ENCODE measurements at regions of chr17 and their contacts with region 1.

Region 1: DNA sequence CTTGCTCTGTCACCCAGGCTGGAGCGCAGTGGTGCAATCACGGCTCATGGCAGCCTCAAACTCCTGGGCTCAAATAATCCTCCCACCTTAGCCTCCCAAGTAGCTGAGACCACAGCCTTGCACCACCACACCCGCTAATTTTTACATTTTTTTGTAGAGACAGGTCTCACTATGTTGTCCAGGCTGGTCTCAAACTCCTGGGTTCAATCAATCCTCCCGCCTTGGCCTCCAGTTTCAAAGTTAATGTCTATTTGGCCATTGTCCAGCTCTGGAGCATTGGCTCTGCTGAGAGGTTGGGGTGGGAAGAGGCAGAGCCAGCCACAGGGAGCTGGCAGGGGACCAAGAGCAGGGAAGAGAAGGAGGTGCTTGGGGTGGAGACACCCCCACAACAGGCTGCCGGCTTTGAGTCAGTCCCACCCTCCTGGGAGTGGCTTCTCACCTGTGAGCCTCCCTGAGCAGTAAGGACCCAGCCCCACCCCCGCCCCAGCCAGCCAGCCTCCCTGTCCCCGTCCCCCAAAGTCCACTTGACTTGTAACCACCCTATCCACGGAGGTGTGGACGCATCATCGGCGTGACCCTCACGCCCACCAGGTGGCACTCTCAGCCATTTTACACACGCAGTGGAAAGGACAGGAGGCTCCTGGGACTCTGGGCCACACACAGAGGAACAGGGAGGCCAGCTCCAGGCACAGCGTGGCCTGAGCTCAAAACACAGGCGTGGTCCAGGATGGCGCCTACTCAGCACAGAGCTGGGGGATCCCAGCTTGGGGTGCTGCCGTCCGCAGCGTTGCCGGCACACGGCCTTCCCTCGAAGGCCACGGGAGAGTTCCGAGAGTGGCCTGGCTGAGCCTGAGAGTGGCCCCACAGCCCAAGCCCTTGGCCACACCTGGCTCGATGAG is 22.8 kb upstream of the PVALEF start:
- DNase-seq: peak; percentile 29 to 61 (median 51)
- ATAC-seq: peak; percentile 88
- H3K4me3 ChIP-seq: no peak overlapping the region
- H3K4me3 Mint-ChIP-seq: no peak overlapping the region
- H3K27ac ChIP-seq: no peak overlapping the region
- H3K27ac Mint-ChIP-seq: peak overlapping the region in 1 of 9 donors; percentile 43
- H3K4me1 ChIP-seq: no peaks in the 10 kb centered on the region
- H3K4me1 Mint-ChIP-seq: peaks cover 0 to 4% (median 0%) of the 10 kb centered on the region in 7 donors
- H3K27me3 ChIP-seq: no peaks in the 10 kb centered on the region
- H3K27me3 Mint-ChIP-seq: peaks cover 0 to 4% (median 0%) of the 10 kb centered on the region in 5 donors

Region 2: GRCh38 chr17:81200695-81201580 is 58.4 kb after region 1 on chr17:
- CTCF ChIA-PET with region 1: no interaction called
- POLR2A ChIA-PET with region 1: no interaction called
- intact Hi-C with region 1: loop called in 1 of 2 experiments (anchors 2 kb)
- DNase-seq: peak in 1 of 9 donors; percentile 9
- ATAC-seq: peak; percentile 86
- H3K4me3 ChIP-seq: no peak overlapping the region
- H3K4me3 Mint-ChIP-seq: no peak overlapping the region
- H3K27ac ChIP-seq: no peak overlapping the region
- H3K27ac Mint-ChIP-seq: peak overlapping the region in 1 of 9 donors; percentile 62
- H3K4me1 ChIP-seq: no peaks in the 10 kb centered on the region
- H3K4me1 Mint-ChIP-seq: no peaks in the 10 kb centered on the region
- H3K27me3 ChIP-seq: no peaks in the 10 kb centered on the region
- H3K27me3 Mint-ChIP-seq: no peaks in the 10 kb centered on the region

Region 3: DNA sequence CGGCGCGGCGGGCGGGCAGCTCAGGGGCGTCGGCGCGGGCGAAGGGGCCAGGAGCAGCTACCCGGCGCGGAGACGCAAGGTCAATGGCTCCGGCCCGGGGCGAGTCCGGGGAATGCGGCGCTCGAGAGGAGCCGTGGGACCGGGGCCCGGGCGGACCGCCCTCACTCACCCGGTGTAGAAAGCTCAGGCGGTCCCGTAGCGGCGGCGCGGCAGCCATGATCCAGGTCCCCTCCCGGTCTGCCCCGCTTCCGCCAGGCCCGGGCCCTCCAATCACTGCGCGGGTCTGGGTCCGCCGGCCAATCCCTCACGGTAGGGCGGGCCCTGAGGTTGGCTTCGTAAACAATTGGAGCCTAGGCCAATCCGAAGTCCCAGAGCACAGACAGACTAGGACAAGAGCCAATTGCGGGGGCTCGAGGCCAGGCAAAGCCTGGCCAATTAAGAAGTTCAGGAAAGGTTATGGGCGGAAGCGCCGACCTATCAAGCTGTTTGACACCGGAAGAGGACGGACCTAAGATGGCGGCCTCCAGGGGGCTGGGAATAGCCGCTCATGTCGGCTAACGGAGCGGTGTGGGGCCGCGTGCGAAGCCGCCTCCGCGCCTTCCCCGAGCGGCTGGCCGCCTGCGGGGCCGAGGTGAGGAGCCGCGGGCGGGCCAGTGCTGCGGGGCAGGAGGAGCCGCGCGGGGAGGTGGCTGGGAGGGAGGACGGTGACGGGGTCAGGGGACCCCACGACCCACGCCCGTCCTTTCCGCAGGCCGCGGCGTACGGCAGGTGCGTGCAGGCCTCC is 96.5 kb after region 1 on chr17 and contains the starts of genes NDUFAF8 and TEPSIN:
- CTCF ChIA-PET with region 1: interaction called, 7 read pairs
- POLR2A ChIA-PET with region 1: no interaction called
- intact Hi-C with region 1: loop called in 1 of 2 experiments (anchors 1 kb)
- DNase-seq: peak; percentile 87 to 98 (median 97)
- ATAC-seq: peak; percentile 98
- H3K4me3 ChIP-seq: peak within 1 kb of the TSS; percentile 71
- H3K4me3 Mint-ChIP-seq: peak within 1 kb of the TSS; percentile 92 to 97 (median 95)
- H3K27ac ChIP-seq: peak within 1 kb of the TSS; percentile 79
- H3K27ac Mint-ChIP-seq: peak within 1 kb of the TSS; percentile 86 to 95 (median 90)
- H3K4me1 ChIP-seq: peaks cover 22 to 24% of the 10 kb centered on the region in 2 donors
- H3K4me1 Mint-ChIP-seq: peaks cover 17 to 51% (median 38%) of the 10 kb centered on the region in 7 donors
- H3K27me3 ChIP-seq: no peaks in the 10 kb centered on the region
- H3K27me3 Mint-ChIP-seq: no peaks in the 10 kb centered on the region
- total RNA-seq, gene NDUFAF8: 34.2 to 45.6 (median 43.5) TPM
- total RNA-seq, gene TEPSIN: 52.6 to 115 (median 90.0) TPM

Region 4: GRCh38 chr17:81601525-81602120 is 459.1 kb after region 1 on chr17:
- CTCF ChIA-PET with region 1: interaction called, 4 read pairs
- POLR2A ChIA-PET with region 1: no interaction called
- intact Hi-C with region 1: loop called in 1 of 2 experiments (anchors 5 kb)
- DNase-seq: peak in 8 of 9 donors; percentile 30 to 69 (median 60)
- ATAC-seq: peak; percentile 92
- H3K4me3 ChIP-seq: no peak overlapping the region
- H3K4me3 Mint-ChIP-seq: no peak overlapping the region
- H3K27ac ChIP-seq: no peak overlapping the region
- H3K27ac Mint-ChIP-seq: peak overlapping the region in 3 of 9 donors; percentile 1 to 48 (median 25)
- H3K4me1 ChIP-seq: peaks cover 0 to 6% of the 10 kb centered on the region in 2 donors
- H3K4me1 Mint-ChIP-seq: peaks cover 2 to 14% (median 9%) of the 10 kb centered on the region in 7 donors
- H3K27me3 ChIP-seq: no peaks in the 10 kb centered on the region
- H3K27me3 Mint-ChIP-seq: no peaks in the 10 kb centered on the region

Measured in naive thymus-derived CD4-positive, alpha-beta T cell (primary cell).